ENCODE measurements at regions of chr17 and their contacts with region 1.

Region 1: DNA sequence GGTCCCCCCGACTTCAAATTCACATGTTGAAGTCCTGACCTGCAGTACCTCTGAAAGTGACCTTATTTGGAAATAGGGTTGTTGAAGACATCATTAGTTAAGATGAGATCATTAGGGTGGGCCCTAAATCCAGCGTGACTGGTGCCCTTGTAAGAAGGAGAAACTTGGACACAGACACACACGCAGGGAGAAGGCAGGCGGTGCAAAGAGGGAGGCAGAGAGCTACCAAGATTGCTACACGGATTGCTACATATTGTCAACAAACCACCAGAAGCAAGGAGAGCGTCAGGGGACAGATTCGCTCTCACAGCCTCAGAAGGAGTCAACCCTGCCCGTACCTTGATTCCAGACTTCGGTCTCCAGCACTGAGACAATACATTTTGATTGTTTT is 6.8 kb upstream of the WBP2 start:
- DNase-seq: no peak
- H3K4me3 Mint-ChIP-seq: no peak overlapping the region
- H3K27ac Mint-ChIP-seq: no peak overlapping the region
- H3K4me1 Mint-ChIP-seq: peaks cover 33% of the 10 kb centered on the region
- H3K27me3 Mint-ChIP-seq: no peaks in the 10 kb centered on the region

Region 2: GRCh38 chr17:75764711-75765421 is 97.1 kb before region 1 on chr17 and contains the start of gene GALK1:
- CTCF ChIA-PET with region 1: interaction called, 13 read pairs
- intact Hi-C with region 1: no loop called
- DNase-seq: peak; percentile 82
- H3K4me3 Mint-ChIP-seq: peak within 1 kb of the TSS; percentile 84
- H3K27ac Mint-ChIP-seq: peak within 1 kb of the TSS; percentile 79
- H3K4me1 Mint-ChIP-seq: peaks cover 10% of the 10 kb centered on the region
- H3K27me3 Mint-ChIP-seq: no peaks in the 10 kb centered on the region
- total RNA-seq, gene GALK1: 48.7 to 50.2 TPM

Region 3: GRCh38 chr17:75872434-75873351 is 10.8 kb after region 1 on chr17:
- CTCF ChIA-PET with region 1: interaction called, 66 read pairs
- intact Hi-C with region 1: no loop called
- DNase-seq: peak; percentile 36
- H3K4me3 Mint-ChIP-seq: no peak overlapping the region
- H3K27ac Mint-ChIP-seq: peak overlapping the region; percentile 36
- H3K4me1 Mint-ChIP-seq: peaks cover 29% of the 10 kb centered on the region
- H3K27me3 Mint-ChIP-seq: no peaks in the 10 kb centered on the region

Region 4: GRCh38 chr17:75877752-75878173 is 15.8 kb after region 1 on chr17:
- CTCF ChIA-PET with region 1: interaction called, 66 read pairs
- intact Hi-C with region 1: no loop called
- DNase-seq: peak; percentile 74
- H3K4me3 Mint-ChIP-seq: peak overlapping the region; percentile 93
- H3K27ac Mint-ChIP-seq: peak overlapping the region; percentile 83
- H3K4me1 Mint-ChIP-seq: peaks cover 32% of the 10 kb centered on the region
- H3K27me3 Mint-ChIP-seq: peaks cover 3% of the 10 kb centered on the region

Measured in activated naive CD4-positive, alpha-beta T cell treated with anti-CD3 and anti-CD28 coated beads for 36 hours (primary cell).